GM12878 (cell line): ENCODE measurements at regions of chr10 and their contacts with region 1.

Region 1: GRCh38 chr10:114470956-114471905 is 66.9 kb upstream of the AFAP1L2 start:
- DNase-seq: peak; percentile 24
- ATAC-seq: peak; percentile 99
- H3K4me3 ChIP-seq: no peak overlapping the region
- H3K27ac ChIP-seq: no peak overlapping the region
- H3K4me1 ChIP-seq: 0 out of 2 replicates have a peak, but pooled peaks cover 3% of the 10 kb centered on the region
- H3K27me3 ChIP-seq: no peaks in the 10 kb centered on the region
- CTCF ChIP-seq: peak; percentile 83 to 86 (median 85)
- EP300 ChIP-seq: no peak
- POLR2A ChIP-seq: no peak
- RAD21 ChIP-seq: peak; percentile 89

Region 2: GRCh38 chr10:114024876-114025610 is 446.2 kb before region 1 on chr10:
- CTCF ChIA-PET with region 1: no interaction called
- POLR2A ChIA-PET with region 1: no interaction called
- RAD21 ChIA-PET with region 1: no interaction called
- SMC1A ChIA-PET with region 1: no interaction called
- in situ Hi-C with region 1: no loop called
- intact Hi-C with region 1: no loop called
- DNase-seq: peak; percentile 86
- ATAC-seq: peak; percentile 90
- H3K4me3 ChIP-seq: peak overlapping the region; percentile 51
- H3K27ac ChIP-seq: peak overlapping the region; percentile 86
- H3K4me1 ChIP-seq: peaks cover 25% of the 10 kb centered on the region
- H3K27me3 ChIP-seq: no peaks in the 10 kb centered on the region
- CTCF ChIP-seq: no peak
- EP300 ChIP-seq: peak; percentile 61 to 78
- POLR2A ChIP-seq: peak; percentile 73
- RAD21 ChIP-seq: peak; percentile 35; the same call in 1 of the 2 replicates

Region 3: DNA sequence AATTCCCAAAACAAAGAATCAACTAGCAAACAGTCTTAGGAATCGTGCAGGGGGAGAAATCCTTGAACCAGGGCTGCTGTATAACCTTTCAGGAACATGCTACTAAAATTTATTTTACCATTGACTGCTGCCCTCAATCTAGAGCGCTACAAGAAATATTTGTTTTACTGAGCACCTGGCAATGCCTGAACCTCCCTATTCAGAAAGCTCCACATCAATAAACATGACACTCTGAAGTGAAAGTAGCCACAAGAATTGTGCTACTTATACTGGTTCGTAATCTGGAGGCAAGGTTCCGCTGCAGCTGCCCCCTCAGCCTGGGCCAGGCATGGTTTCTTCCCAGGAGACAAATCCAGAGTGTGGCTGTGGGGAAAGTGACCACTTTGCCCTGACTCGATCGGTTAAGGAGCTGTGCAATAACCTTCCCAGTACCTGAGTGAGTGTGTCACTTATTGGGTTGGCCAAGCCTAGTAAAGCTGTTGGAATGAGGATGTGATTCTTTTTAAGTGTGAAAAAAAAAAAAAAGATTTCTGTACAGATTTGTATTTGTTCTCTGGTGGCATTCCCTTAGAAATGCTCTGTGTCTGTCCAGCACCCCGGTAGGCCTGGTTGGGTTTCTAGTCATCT is 224.4 kb before region 1 on chr10:
- CTCF ChIA-PET with region 1: no interaction called
- POLR2A ChIA-PET with region 1: no interaction called
- RAD21 ChIA-PET with region 1: no interaction called
- SMC1A ChIA-PET with region 1: no interaction called
- in situ Hi-C with region 1: no loop called
- intact Hi-C with region 1: no loop called
- DNase-seq: no peak
- ATAC-seq: no peak
- H3K4me3 ChIP-seq: no peak overlapping the region
- H3K27ac ChIP-seq: no peak overlapping the region
- H3K4me1 ChIP-seq: no peaks in the 10 kb centered on the region
- H3K27me3 ChIP-seq: peaks cover 0 to 5% of the 10 kb centered on the region in 2 experiments; a peak in 2 of 4 replicates
- CTCF ChIP-seq: no peak
- EP300 ChIP-seq: no peak
- POLR2A ChIP-seq: no peak
- RAD21 ChIP-seq: no peak

Region 4: GRCh38 chr10:114499630-114500190 is 28.5 kb after region 1 on chr10:
- CTCF ChIA-PET with region 1: interaction called, 12 read pairs
- POLR2A ChIA-PET with region 1: no interaction called
- RAD21 ChIA-PET with region 1: interaction called, 13 read pairs
- SMC1A ChIA-PET with region 1: interaction called, 6 read pairs
- in situ Hi-C with region 1: no loop called
- intact Hi-C with region 1: no loop called
- DNase-seq: no peak
- ATAC-seq: peak; percentile 10
- H3K4me3 ChIP-seq: peak overlapping the region; percentile 13; the same call in 1 of the 2 replicates
- H3K27ac ChIP-seq: peak overlapping the region; percentile 95
- H3K4me1 ChIP-seq: peaks cover 40% of the 10 kb centered on the region
- H3K27me3 ChIP-seq: no peaks in the 10 kb centered on the region
- CTCF ChIP-seq: no peak
- EP300 ChIP-seq: no peak
- POLR2A ChIP-seq: peak; percentile 55
- RAD21 ChIP-seq: no peak

Region 5: GRCh38 chr10:114526504-114527238 is 55.4 kb after region 1 on chr10:
- CTCF ChIA-PET with region 1: interaction called, 21 read pairs
- POLR2A ChIA-PET with region 1: no interaction called
- RAD21 ChIA-PET with region 1: interaction called, 11 read pairs
- SMC1A ChIA-PET with region 1: interaction called, 21 read pairs
- in situ Hi-C with region 1: no loop called
- intact Hi-C with region 1: loop called (anchors 1 kb)
- DNase-seq: peak; percentile 95
- ATAC-seq: peak; percentile 98
- H3K4me3 ChIP-seq: peak overlapping the region; percentile 69
- H3K27ac ChIP-seq: peak overlapping the region; percentile 71
- H3K4me1 ChIP-seq: 0 out of 2 replicates have a peak, but pooled peaks cover 3% of the 10 kb centered on the region
- H3K27me3 ChIP-seq: no peaks in the 10 kb centered on the region; a peak in 1 of 4 replicates
- CTCF ChIP-seq: no peak
- EP300 ChIP-seq: peak in 1 of 2 experiments; percentile 64; a peak in 2 of 4 replicates
- POLR2A ChIP-seq: peak; percentile 90
- RAD21 ChIP-seq: 0 out of 2 replicates have a peak, but pooled peaks have one; percentile 4

Region 6: DNA sequence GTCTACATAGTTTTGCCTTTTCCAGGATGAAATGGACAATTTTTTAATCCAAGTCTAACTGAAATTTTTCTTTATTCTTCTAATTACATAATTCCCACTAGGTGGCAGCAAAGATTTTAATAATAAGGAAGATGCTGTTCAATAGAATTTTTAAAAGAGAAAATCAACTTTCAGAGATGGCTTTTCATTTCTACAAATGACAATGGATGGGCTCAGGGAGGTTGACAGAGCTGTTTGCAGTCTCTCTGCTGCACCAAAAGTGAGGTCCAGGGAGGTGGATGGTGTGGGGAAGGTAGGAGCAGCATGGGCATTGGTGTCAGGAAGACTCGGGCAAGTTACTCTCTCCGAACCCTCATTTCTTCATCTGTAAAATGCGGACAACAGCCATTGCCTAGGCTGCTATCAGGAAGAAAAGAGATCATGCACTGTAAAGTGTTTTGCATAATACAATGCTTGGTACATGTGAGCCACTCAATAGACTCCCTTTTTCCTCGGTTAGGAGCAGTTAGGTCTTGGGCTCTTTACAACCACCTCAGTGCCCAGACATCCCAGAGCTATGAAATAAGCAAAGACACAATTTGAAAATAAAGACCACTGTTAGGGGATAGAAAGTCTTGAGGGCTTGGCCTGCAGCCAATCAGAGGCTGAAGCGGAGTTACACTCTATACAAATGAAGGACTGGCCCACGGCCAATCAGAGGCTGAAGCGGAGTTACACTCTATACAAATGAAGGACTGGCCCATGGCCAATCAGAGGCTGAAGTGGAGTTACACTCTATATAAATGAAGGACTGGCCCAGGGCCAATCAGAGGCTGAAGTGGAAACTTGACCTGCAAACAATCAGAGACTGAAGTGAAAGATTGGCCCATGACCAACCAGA is 79.8 kb after region 1 on chr10:
- CTCF ChIA-PET with region 1: interaction called, 98 read pairs
- POLR2A ChIA-PET with region 1: no interaction called
- RAD21 ChIA-PET with region 1: interaction called, 56 read pairs
- SMC1A ChIA-PET with region 1: interaction called, 54 read pairs
- in situ Hi-C with region 1: no loop called
- intact Hi-C with region 1: loop called (anchors 1 kb)
- DNase-seq: no peak
- ATAC-seq: no peak; the same call in 2 of the 3 replicates
- H3K4me3 ChIP-seq: no peak overlapping the region
- H3K27ac ChIP-seq: no peak overlapping the region
- H3K4me1 ChIP-seq: no peaks in the 10 kb centered on the region
- H3K27me3 ChIP-seq: no peaks in the 10 kb centered on the region; a peak in 1 of 4 replicates
- CTCF ChIP-seq: peak in 2 of 3 experiments; percentile 37 to 42; a peak in 3 of 6 replicates
- EP300 ChIP-seq: no peak
- POLR2A ChIP-seq: no peak
- RAD21 ChIP-seq: peak; percentile 41

Region 7: DNA sequence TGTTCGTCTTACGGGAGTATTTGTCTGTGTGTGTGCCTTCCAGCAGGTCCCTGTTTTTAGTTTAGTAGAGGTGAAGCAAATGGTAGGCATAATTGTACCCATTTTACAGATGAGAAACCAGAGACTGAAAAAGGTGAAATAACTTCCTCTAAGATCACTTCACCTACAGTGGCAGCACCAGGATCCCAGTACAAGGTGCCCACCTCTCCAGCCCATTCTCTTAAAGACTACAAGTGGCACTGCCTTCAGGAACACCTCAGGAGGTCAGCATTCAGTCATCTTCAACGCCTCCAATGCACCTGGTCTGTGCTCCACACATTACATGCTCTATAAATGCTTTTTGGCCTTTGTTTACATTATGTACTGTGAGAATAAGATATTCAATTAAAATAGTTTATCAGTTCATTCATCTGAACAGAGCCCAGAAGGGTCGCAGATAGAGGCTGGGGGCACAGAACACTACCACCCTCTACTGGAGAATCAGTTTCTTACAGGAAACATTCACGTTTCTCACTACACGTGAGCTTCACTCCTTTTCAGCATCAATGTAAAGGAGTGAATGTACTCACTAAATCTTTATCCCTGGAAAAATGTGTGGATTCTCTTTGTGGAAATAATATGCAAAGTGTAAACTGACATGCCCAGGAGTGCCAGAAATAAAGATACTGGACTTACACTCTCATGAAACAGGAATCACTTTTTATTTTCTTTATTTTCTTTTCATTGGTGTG is 232.3 kb after region 1 on chr10:
- CTCF ChIA-PET with region 1: interaction called, 11 read pairs
- POLR2A ChIA-PET with region 1: no interaction called
- RAD21 ChIA-PET with region 1: interaction called, 9 read pairs
- SMC1A ChIA-PET with region 1: interaction called, 3 read pairs
- in situ Hi-C with region 1: loop called (anchors 5 kb)
- intact Hi-C with region 1: loop called (anchors 2 kb)
- DNase-seq: no peak
- ATAC-seq: peak; percentile 61
- H3K4me3 ChIP-seq: no peak overlapping the region
- H3K27ac ChIP-seq: no peak overlapping the region
- H3K4me1 ChIP-seq: no peaks in the 10 kb centered on the region
- H3K27me3 ChIP-seq: no peaks in the 10 kb centered on the region; a peak in 1 of 4 replicates
- CTCF ChIP-seq: peak; percentile 46 to 58 (median 57)
- EP300 ChIP-seq: no peak
- POLR2A ChIP-seq: no peak
- RAD21 ChIP-seq: peak; percentile 68

Region 8: GRCh38 chr10:114862456-114862855 is 391.2 kb after region 1 on chr10:
- CTCF ChIA-PET with region 1: interaction called, 10 read pairs
- POLR2A ChIA-PET with region 1: no interaction called
- RAD21 ChIA-PET with region 1: no interaction called
- SMC1A ChIA-PET with region 1: no interaction called
- in situ Hi-C with region 1: no loop called
- intact Hi-C with region 1: no loop called
- DNase-seq: no peak
- ATAC-seq: no peak
- H3K4me3 ChIP-seq: no peak overlapping the region
- H3K27ac ChIP-seq: no peak overlapping the region
- H3K4me1 ChIP-seq: no peaks in the 10 kb centered on the region
- H3K27me3 ChIP-seq: no peaks in the 10 kb centered on the region
- CTCF ChIP-seq: no peak
- EP300 ChIP-seq: no peak
- POLR2A ChIP-seq: no peak
- RAD21 ChIP-seq: no peak

Region 9: GRCh38 chr10:115107830-115108229 is 636.6 kb after region 1 on chr10:
- CTCF ChIA-PET with region 1: no interaction called
- POLR2A ChIA-PET with region 1: no interaction called
- RAD21 ChIA-PET with region 1: no interaction called
- SMC1A ChIA-PET with region 1: no interaction called
- in situ Hi-C with region 1: no loop called
- intact Hi-C with region 1: no loop called
- DNase-seq: no peak
- ATAC-seq: no peak
- H3K4me3 ChIP-seq: no peak overlapping the region
- H3K27ac ChIP-seq: no peak overlapping the region
- H3K4me1 ChIP-seq: no peaks in the 10 kb centered on the region
- H3K27me3 ChIP-seq: no peaks in the 10 kb centered on the region
- CTCF ChIP-seq: no peak
- EP300 ChIP-seq: no peak
- POLR2A ChIP-seq: no peak
- RAD21 ChIP-seq: no peak

Region 10: GRCh38 chr10:115129752-115130151 is 658.5 kb after region 1 on chr10:
- CTCF ChIA-PET with region 1: interaction called, 20 read pairs
- POLR2A ChIA-PET with region 1: no interaction called
- RAD21 ChIA-PET with region 1: interaction called, 13 read pairs
- SMC1A ChIA-PET with region 1: interaction called, 11 read pairs
- in situ Hi-C with region 1: loop called (anchors 10 kb)
- intact Hi-C with region 1: loop called (anchors 2 kb)
- DNase-seq: no peak
- ATAC-seq: peak; percentile 50
- H3K4me3 ChIP-seq: no peak overlapping the region
- H3K27ac ChIP-seq: no peak overlapping the region
- H3K4me1 ChIP-seq: no peaks in the 10 kb centered on the region
- H3K27me3 ChIP-seq: no peaks in the 10 kb centered on the region
- CTCF ChIP-seq: no peak; a peak in 1 of 6 replicates
- EP300 ChIP-seq: no peak
- POLR2A ChIP-seq: no peak
- RAD21 ChIP-seq: peak; percentile 55